ENCODE measurements at regions of chr1 and their contacts with region 1.

Region 1: DNA sequence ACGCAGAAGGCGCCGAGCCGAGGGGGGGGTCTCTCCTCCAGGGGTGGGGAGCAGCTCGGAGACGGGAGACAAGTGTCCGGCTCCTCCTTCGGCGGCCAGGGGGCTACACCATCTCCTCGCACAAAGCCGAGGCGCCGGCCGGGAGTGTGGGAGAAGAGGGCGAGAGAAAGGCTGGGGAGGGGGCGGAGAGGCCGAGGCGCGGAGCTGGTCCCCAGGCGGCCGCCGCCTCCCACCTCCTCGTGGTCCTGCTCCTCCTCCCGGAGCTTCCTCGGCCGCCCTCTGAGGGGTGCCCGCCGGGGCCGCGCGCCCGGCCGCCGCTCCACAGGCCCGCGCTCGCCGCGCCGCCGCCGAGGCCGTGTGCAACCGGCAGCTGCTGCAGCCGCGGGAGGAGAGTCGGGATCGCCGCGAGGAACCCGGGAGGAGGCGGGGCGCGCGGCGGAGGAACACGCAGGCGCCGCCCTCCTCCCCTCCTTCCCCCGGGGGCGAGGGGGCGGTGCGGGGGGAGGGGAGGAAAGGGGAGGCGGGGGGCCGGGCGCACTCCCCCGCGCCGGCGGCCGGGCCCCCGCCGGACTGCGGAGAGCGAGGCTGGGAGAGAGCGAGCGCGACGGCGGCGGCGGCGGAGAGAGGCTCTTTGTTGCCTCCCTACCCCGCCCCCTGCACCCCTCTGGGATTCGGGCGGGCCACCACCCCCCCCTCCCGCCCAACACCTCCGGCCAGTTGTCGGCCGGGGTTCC is at the start of gene ENAH:
- DNase-seq: peak in 1 of 2 donors; percentile 89
- H3K4me3 ChIP-seq: peak within 1 kb of the TSS; percentile 58 to 79
- H3K27ac ChIP-seq: peak within 1 kb of the TSS; percentile 99 to 100
- H3K4me1 ChIP-seq: peaks cover 3 to 37% of the 10 kb centered on the region in 2 donors
- H3K27me3 ChIP-seq: no peaks in the 10 kb centered on the region
- CTCF ChIP-seq: no peak
- total RNA-seq, gene ENAH: 103 TPM

Region 2: GRCh38 chr1:225242623-225243022 is 410.3 kb before region 1 on chr1:
- intact Hi-C with region 1: no loop called
- DNase-seq: no peak
- H3K4me3 ChIP-seq: no peak overlapping the region
- H3K27ac ChIP-seq: no peak overlapping the region
- H3K4me1 ChIP-seq: no peaks in the 10 kb centered on the region
- H3K27me3 ChIP-seq: no peaks in the 10 kb centered on the region
- CTCF ChIP-seq: no peak

Region 3: DNA sequence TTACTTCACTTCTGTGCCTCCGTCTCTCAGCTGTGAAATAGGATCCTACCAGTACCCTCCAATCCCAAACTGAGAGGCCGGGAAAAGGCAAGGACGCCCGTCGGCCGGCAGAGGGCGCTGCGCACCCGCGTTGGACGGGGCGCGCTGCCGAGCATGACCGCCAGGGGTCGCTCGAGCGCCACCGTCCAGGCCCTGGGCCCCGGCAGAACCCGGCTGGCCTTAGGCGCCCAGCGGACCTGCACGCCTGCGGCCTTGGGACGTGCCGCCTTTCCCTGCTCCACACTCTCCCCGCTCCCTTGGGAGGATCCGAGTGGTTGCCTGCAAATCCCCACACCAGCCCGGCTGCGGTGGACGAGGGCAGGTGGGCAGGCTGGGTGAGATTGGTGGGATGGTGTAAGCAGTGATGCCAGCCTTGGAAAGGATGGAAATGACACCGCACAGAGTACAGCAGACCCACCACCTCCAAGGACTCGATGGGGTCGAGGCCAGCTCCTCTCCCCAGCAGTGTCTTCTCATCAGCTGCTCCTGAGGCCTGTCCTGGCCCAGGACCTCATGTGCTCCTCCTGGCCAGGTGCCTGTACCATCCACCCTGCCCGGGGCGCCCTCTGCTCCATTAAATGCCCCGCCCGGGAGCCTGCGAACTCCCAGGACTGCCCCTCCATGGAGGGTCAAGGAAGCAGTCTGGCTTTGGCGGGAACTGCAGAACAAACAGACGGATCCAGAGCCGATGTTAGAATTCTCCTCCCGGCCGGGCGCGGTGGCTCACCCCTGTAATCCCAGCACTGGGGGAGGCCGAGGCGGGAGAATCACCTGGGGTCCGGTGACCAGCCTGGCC is 177.7 kb before region 1 on chr1:
- intact Hi-C with region 1: loop called (anchors 5 kb)
- DNase-seq: peak in 1 of 2 donors; percentile 83
- H3K4me3 ChIP-seq: peak overlapping the region in 1 of 2 donors; percentile 34
- H3K27ac ChIP-seq: no peak overlapping the region
- H3K4me1 ChIP-seq: peaks cover 0 to 13% of the 10 kb centered on the region in 2 donors
- H3K27me3 ChIP-seq: no peaks in the 10 kb centered on the region
- CTCF ChIP-seq: peak; percentile 100

Region 4: GRCh38 chr1:225607355-225607754 is 45.5 kb before region 1 on chr1:
- intact Hi-C with region 1: loop called (anchors 5 kb)
- DNase-seq: no peak
- H3K4me3 ChIP-seq: no peak overlapping the region
- H3K27ac ChIP-seq: peak overlapping the region; percentile 24 to 64
- H3K4me1 ChIP-seq: peaks cover 0 to 46% of the 10 kb centered on the region in 2 donors
- H3K27me3 ChIP-seq: no peaks in the 10 kb centered on the region
- CTCF ChIP-seq: no peak

Region 5: DNA sequence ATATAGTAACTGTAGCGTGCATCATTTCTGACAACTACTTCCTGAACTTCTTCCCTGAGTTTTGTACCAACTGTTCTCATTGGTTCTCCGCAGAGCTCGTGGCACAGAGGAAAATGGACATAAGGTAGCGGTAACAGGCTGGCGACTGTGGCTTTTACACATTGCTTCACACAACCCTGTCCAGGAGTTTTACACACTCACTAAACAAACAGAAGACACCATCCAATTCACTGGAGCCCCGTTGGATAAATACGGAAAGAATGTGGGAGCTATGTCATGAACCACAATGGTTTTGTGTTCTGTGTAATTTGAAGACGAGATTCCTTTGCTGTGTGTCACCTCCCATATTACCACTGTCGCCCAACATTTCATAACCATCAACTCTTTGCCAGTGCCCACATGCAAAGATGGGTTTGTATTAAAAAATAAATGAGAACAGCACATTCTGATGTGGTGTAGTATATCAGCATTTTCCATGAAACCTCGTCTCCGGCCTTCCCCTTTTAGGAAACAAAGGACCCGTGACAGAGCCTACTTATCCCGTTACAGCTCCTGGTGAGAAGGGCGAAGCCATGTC is 47.4 kb after region 1 on chr1:
- intact Hi-C with region 1: loop called (anchors 1 kb)
- DNase-seq: peak in 1 of 2 donors; percentile 90
- H3K4me3 ChIP-seq: peak overlapping the region in 1 of 2 donors; percentile 19
- H3K27ac ChIP-seq: peak overlapping the region; percentile 71 to 79
- H3K4me1 ChIP-seq: peaks cover 0 to 31% of the 10 kb centered on the region in 2 donors
- H3K27me3 ChIP-seq: no peaks in the 10 kb centered on the region
- CTCF ChIP-seq: no peak

Region 6: GRCh38 chr1:225772323-225772768 is 119.5 kb after region 1 on chr1:
- intact Hi-C with region 1: loop called (anchors 2 kb)
- DNase-seq: peak in 1 of 2 donors; percentile 92
- H3K4me3 ChIP-seq: no peak overlapping the region
- H3K27ac ChIP-seq: peak overlapping the region in 1 of 2 donors; percentile 15
- H3K4me1 ChIP-seq: peaks cover 3 to 20% of the 10 kb centered on the region in 2 donors
- H3K27me3 ChIP-seq: no peaks in the 10 kb centered on the region
- CTCF ChIP-seq: peak; percentile 84 to 93 (median 90)